Ovary (tissue), 10 donors: ENCODE measurements at regions of chr19 and their contacts with region 1.

Region 1: DNA sequence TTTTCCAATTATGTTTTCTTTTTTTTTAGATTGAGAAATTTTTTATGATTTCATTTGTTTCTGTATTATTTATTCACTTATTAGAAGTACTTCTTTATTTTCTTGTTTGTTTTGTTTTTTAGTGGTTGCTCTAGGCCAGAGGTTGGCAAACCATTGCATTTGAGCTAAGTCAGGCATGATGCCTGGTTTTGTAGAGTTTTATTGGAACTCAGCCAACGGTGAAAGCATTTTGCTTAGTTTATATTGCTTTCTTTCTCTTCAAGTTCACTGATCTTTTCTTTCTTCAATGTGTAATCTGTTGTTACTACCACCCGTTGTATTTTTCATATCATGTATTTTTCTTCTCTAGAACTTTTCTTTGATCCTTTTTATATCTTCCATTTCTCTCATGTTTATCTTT is 19.7 kb downstream of the ZNF567 start:
- DNase-seq: no peak
- H3K4me3 ChIP-seq: no peak overlapping the region
- H3K27ac ChIP-seq: no peak overlapping the region
- H3K4me1 ChIP-seq: no peaks in the 10 kb centered on the region
- H3K27me3 ChIP-seq: no peaks in the 10 kb centered on the region
- CTCF ChIP-seq: no peak
- EP300 ChIP-seq: no peak
- POLR2A ChIP-seq: no peak

Region 2: GRCh38 chr19:37045140-37045539 is 338.0 kb after region 1 on chr19:
- intact Hi-C with region 1: no loop called
- DNase-seq: no peak
- H3K4me3 ChIP-seq: no peak overlapping the region
- H3K27ac ChIP-seq: no peak overlapping the region
- H3K4me1 ChIP-seq: no peaks in the 10 kb centered on the region
- H3K27me3 ChIP-seq: no peaks in the 10 kb centered on the region
- CTCF ChIP-seq: no peak
- EP300 ChIP-seq: no peak
- POLR2A ChIP-seq: no peak

Region 3: DNA sequence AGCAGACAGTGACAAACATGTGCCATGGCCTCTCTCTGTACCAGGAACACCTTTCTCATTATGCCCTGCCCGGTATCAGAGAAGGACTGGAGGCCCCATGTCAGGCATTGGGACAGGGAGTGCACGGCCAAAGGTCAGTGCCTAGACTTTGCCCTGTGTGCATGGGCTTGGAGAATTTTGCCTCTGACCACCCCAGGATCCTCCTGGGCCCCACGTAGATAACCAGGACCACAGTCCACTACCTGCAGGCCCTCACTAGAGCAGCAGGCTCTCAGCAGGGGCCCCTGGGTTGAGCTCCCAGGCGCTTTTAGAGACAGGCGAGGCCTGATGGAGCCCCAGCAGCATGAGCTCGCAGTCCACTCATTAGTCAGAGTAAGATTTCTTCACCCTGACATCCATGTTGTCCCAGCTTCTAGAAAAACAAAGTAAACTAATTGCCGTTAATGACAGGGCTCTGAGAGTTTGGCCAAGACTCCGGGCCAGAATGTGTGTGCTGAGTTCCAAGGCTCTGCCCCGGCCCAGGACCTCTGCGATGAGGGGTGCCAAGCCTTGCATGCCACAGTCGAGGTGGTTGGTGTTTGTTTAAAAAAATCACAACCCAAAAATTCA is 1994.4 kb after region 1 on chr19:
- intact Hi-C with region 1: loop called in 1 of 4 experiments (anchors 5 kb)
- DNase-seq: peak in 2 of 5 donors; percentile 57 to 61
- H3K4me3 ChIP-seq: no peak overlapping the region
- H3K27ac ChIP-seq: peak overlapping the region in 1 of 2 donors; percentile 23
- H3K4me1 ChIP-seq: peaks cover 25% of the 10 kb centered on the region
- H3K27me3 ChIP-seq: no peaks in the 10 kb centered on the region
- CTCF ChIP-seq: no peak
- EP300 ChIP-seq: no peak
- POLR2A ChIP-seq: no peak